Naive thymus-derived CD4-positive, alpha-beta T cell (primary cell): ENCODE measurements at regions of chr7 and their contacts with region 1.

Region 1: DNA sequence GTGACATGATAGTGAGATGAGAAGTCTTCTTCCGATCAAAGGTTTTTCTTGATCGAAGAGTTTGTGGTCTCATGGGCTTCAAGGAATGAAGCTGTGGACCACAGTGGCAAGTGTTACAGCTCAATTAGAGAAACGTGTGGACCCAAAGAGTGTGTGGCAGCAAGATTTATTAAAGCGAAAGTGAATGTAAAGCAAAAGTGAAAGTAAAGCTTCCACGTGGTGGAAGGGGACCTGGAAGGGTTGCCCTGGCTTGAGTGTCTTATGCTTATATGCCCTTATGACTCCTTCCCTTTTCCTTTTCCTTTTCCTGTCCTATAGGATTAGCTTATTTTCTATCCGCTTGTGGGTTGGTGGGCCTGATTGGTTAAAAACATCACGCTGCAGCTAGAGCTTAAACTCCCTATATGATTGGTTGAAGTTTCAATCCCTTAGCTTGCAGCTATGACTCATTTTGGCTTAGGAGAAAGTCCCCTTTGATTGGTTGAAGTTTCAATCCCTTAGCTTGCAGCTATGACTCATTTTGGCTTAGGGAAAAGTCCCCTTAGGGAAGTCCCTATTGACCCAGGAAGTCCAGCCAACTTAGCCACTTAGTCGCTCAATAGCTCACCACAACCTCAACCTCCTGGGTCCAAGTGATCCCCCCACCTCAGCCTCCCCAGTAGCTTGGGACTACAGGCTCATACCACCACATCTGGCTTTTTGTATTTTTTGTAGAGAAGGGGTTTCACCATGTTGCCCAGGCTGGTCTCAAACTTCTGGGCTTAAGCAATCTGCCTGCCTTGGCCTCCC is 34.7 kb downstream of the MRPS24 start:
- DNase-seq: peak in 8 of 9 donors; percentile 25 to 56 (median 46)
- ATAC-seq: peak; percentile 44
- H3K4me3 ChIP-seq: peak overlapping the region; percentile 79
- H3K4me3 Mint-ChIP-seq: peak overlapping the region; percentile 74 to 96 (median 84)
- H3K27ac ChIP-seq: peak overlapping the region; percentile 33
- H3K27ac Mint-ChIP-seq: peak overlapping the region; percentile 79 to 95 (median 86)
- H3K4me1 ChIP-seq: peaks cover 8 to 15% of the 10 kb centered on the region in 2 donors
- H3K4me1 Mint-ChIP-seq: peaks cover 2 to 27% (median 21%) of the 10 kb centered on the region in 7 donors
- H3K27me3 ChIP-seq: no peaks in the 10 kb centered on the region
- H3K27me3 Mint-ChIP-seq: peaks cover 0 to 6% (median 0%) of the 10 kb centered on the region in 5 donors

Region 2: DNA sequence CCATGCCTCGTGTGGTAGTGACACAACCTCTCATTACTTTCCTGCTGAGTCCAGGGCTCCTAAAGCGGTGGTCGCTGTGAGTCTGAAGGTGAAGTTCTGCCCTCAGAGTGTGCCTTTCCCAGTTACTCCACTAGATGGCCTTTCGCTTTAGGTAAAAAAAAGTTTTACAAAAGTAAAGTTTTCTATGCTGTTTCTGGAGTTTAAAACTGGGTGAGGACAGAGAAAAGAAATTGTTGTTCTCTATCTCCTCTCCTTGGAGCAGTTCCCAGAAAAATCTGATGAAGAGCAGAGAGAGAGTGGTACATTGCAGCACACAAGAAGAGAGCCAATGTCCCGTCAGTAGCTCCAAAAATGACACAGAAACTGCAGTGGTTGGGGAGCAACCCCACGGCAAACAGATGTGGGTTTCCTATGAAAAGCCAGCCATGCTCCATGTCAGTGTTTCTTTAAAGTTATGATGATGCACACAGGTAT is 1854.8 kb before region 1 on chr7:
- CTCF ChIA-PET with region 1: no interaction called
- POLR2A ChIA-PET with region 1: no interaction called
- intact Hi-C with region 1: loop called in 1 of 2 experiments (anchors 1 kb)
- DNase-seq: no peak
- ATAC-seq: no peak
- H3K4me3 ChIP-seq: no peak overlapping the region
- H3K4me3 Mint-ChIP-seq: no peak overlapping the region
- H3K27ac ChIP-seq: no peak overlapping the region
- H3K27ac Mint-ChIP-seq: no peak overlapping the region
- H3K4me1 ChIP-seq: no peaks in the 10 kb centered on the region
- H3K4me1 Mint-ChIP-seq: no peaks in the 10 kb centered on the region
- H3K27me3 ChIP-seq: no peaks in the 10 kb centered on the region
- H3K27me3 Mint-ChIP-seq: peaks cover 6 to 22% (median 16%) of the 10 kb centered on the region in 5 donors

Region 3: DNA sequence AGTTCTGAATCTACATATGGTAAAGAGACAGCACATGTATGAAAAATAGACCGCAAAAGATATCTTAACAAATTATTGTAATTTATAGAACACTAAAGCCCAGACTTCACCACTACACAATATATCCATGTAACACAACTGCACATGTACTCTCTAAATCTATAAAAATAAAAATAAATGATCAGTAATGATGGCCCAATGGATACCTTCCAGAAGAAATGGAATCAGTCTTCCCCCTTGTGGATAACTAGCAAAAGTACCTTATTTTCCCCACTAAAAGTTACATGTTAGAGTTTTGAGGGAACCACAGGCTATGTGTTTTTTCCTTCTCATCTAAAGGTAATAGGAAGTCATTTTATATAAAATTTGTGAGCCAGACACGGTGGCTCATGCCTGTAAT is 948.5 kb before region 1 on chr7:
- CTCF ChIA-PET with region 1: no interaction called
- POLR2A ChIA-PET with region 1: no interaction called
- intact Hi-C with region 1: loop called in 1 of 2 experiments (anchors 2 kb)
- DNase-seq: no peak
- ATAC-seq: no peak
- H3K4me3 ChIP-seq: no peak overlapping the region
- H3K4me3 Mint-ChIP-seq: no peak overlapping the region
- H3K27ac ChIP-seq: no peak overlapping the region
- H3K27ac Mint-ChIP-seq: peak overlapping the region in 4 of 9 donors; percentile 27 to 96 (median 54)
- H3K4me1 ChIP-seq: no peaks in the 10 kb centered on the region
- H3K4me1 Mint-ChIP-seq: peaks cover 18 to 34% (median 25%) of the 10 kb centered on the region in 7 donors
- H3K27me3 ChIP-seq: no peaks in the 10 kb centered on the region
- H3K27me3 Mint-ChIP-seq: peaks cover 0 to 3% (median 0%) of the 10 kb centered on the region in 5 donors

Region 4: GRCh38 chr7:43175570-43176200 is 659.0 kb before region 1 on chr7:
- CTCF ChIA-PET with region 1: no interaction called
- POLR2A ChIA-PET with region 1: no interaction called
- intact Hi-C with region 1: loop called in 1 of 2 experiments (anchors 5 kb)
- DNase-seq: no peak
- ATAC-seq: no peak
- H3K4me3 ChIP-seq: no peak overlapping the region
- H3K4me3 Mint-ChIP-seq: no peak overlapping the region
- H3K27ac ChIP-seq: no peak overlapping the region
- H3K27ac Mint-ChIP-seq: no peak overlapping the region
- H3K4me1 ChIP-seq: no peaks in the 10 kb centered on the region
- H3K4me1 Mint-ChIP-seq: no peaks in the 10 kb centered on the region
- H3K27me3 ChIP-seq: no peaks in the 10 kb centered on the region
- H3K27me3 Mint-ChIP-seq: peaks cover 2 to 16% (median 10%) of the 10 kb centered on the region in 5 donors

Region 5: GRCh38 chr7:43647673-43648472 is 186.8 kb before region 1 on chr7:
- CTCF ChIA-PET with region 1: no interaction called
- POLR2A ChIA-PET with region 1: no interaction called
- intact Hi-C with region 1: loop called (anchors 2 to 5 kb)
- DNase-seq: peak in 3 of 9 donors; percentile 34 to 53 (median 50)
- ATAC-seq: peak; percentile 2
- H3K4me3 ChIP-seq: peak overlapping the region; percentile 22
- H3K4me3 Mint-ChIP-seq: peak overlapping the region; percentile 78 to 91 (median 83)
- H3K27ac ChIP-seq: peak overlapping the region; percentile 80
- H3K27ac Mint-ChIP-seq: peak overlapping the region in 8 of 9 donors; percentile 90 to 100 (median 98)
- H3K4me1 ChIP-seq: peaks cover 88 to 89% of the 10 kb centered on the region in 2 donors
- H3K4me1 Mint-ChIP-seq: peaks cover 78 to 98% (median 95%) of the 10 kb centered on the region in 7 donors
- H3K27me3 ChIP-seq: no peaks in the 10 kb centered on the region
- H3K27me3 Mint-ChIP-seq: no peaks in the 10 kb centered on the region

Region 6: GRCh38 chr7:43729214-43729923 is 105.3 kb before region 1 on chr7 and contains the start of gene COA1:
- CTCF ChIA-PET with region 1: interaction called, 4 read pairs
- POLR2A ChIA-PET with region 1: interaction called, 3 read pairs
- intact Hi-C with region 1: loop called (anchors 1 to 2 kb)
- DNase-seq: peak; percentile 61 to 85 (median 81)
- ATAC-seq: peak; percentile 98
- H3K4me3 ChIP-seq: peak within 1 kb of the TSS; percentile 91
- H3K4me3 Mint-ChIP-seq: peak within 1 kb of the TSS; percentile 81 to 96 (median 94)
- H3K27ac ChIP-seq: peak within 1 kb of the TSS; percentile 76
- H3K27ac Mint-ChIP-seq: peak within 1 kb of the TSS; percentile 75 to 95 (median 90)
- H3K4me1 ChIP-seq: peaks cover 15 to 24% of the 10 kb centered on the region in 2 donors
- H3K4me1 Mint-ChIP-seq: peaks cover 27 to 57% (median 38%) of the 10 kb centered on the region in 7 donors
- H3K27me3 ChIP-seq: no peaks in the 10 kb centered on the region
- H3K27me3 Mint-ChIP-seq: peaks cover 0 to 4% (median 0%) of the 10 kb centered on the region in 5 donors
- total RNA-seq, gene COA1: 51.3 to 73.3 (median 64.6) TPM

Region 7: GRCh38 chr7:43942997-43943704 is 108.5 kb after region 1 on chr7:
- CTCF ChIA-PET with region 1: no interaction called
- POLR2A ChIA-PET with region 1: no interaction called
- intact Hi-C with region 1: no loop called
- DNase-seq: no peak
- ATAC-seq: no peak
- H3K4me3 ChIP-seq: no peak overlapping the region
- H3K4me3 Mint-ChIP-seq: no peak overlapping the region
- H3K27ac ChIP-seq: no peak overlapping the region
- H3K27ac Mint-ChIP-seq: peak overlapping the region in 2 of 9 donors; percentile 17 to 65
- H3K4me1 ChIP-seq: no peaks in the 10 kb centered on the region
- H3K4me1 Mint-ChIP-seq: peaks cover 0 to 6% (median 0%) of the 10 kb centered on the region in 7 donors
- H3K27me3 ChIP-seq: no peaks in the 10 kb centered on the region
- H3K27me3 Mint-ChIP-seq: no peaks in the 10 kb centered on the region